Naive thymus-derived CD4-positive, alpha-beta T cell (primary cell): ENCODE measurements at regions of chr1 and their contacts with region 1.

Region 1: GRCh38 chr1:193754732-193755427 is 568.5 kb upstream of the B3GALT2 start:
- DNase-seq: no peak
- ATAC-seq: no peak
- H3K4me3 ChIP-seq: no peak overlapping the region
- H3K4me3 Mint-ChIP-seq: no peak overlapping the region
- H3K27ac ChIP-seq: no peak overlapping the region
- H3K27ac Mint-ChIP-seq: no peak overlapping the region
- H3K4me1 ChIP-seq: no peaks in the 10 kb centered on the region
- H3K4me1 Mint-ChIP-seq: peaks cover 0 to 6% (median 0%) of the 10 kb centered on the region in 7 donors
- H3K27me3 ChIP-seq: no peaks in the 10 kb centered on the region
- H3K27me3 Mint-ChIP-seq: no peaks in the 10 kb centered on the region

Region 2: DNA sequence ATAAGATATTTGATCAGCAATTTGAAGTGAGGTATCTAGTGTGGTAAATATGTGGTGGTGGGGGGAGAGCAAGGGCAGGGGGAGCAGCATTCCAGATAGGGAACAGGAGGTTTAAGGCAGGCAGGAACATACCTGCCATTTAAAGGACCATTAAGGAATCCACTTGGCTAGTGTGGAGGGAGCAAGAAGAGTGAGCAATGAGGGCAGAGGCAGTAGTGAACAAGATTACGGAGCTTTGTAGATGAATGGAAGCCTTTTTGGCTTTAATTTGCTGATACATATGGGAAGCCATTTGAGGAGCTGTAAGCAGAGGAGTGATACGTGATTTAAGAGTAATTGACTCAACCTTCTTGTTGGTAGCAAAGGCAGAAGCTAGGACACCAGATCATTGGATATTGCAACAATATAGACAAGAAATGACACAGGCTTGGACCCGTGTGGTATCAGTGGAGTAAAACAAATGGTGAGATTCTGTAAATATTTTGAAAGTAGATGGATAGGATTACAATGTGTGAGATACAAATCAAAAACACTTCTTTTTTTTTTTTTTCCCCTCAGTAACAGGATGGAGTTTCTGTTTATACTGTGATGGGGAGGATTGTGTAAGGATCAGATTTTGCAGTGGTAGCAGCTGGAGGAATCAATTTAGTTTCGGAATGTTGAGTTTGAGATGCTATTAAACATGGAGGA is 494.7 kb before region 1 on chr1:
- CTCF ChIA-PET with region 1: no interaction called
- POLR2A ChIA-PET with region 1: no interaction called
- intact Hi-C with region 1: loop called in 1 of 2 experiments (anchors 10 kb)
- DNase-seq: no peak
- ATAC-seq: no peak
- H3K4me3 ChIP-seq: no peak overlapping the region
- H3K4me3 Mint-ChIP-seq: no peak overlapping the region
- H3K27ac ChIP-seq: no peak overlapping the region
- H3K27ac Mint-ChIP-seq: no peak overlapping the region
- H3K4me1 ChIP-seq: no peaks in the 10 kb centered on the region
- H3K4me1 Mint-ChIP-seq: peaks cover 0 to 7% (median 0%) of the 10 kb centered on the region in 7 donors
- H3K27me3 ChIP-seq: no peaks in the 10 kb centered on the region
- H3K27me3 Mint-ChIP-seq: no peaks in the 10 kb centered on the region

Region 3: GRCh38 chr1:193456811-193457280 is 298.0 kb before region 1 on chr1:
- CTCF ChIA-PET with region 1: interaction called, 3 read pairs
- POLR2A ChIA-PET with region 1: no interaction called
- intact Hi-C with region 1: loop called in 1 of 2 experiments (anchors 10 kb)
- DNase-seq: no peak
- ATAC-seq: no peak
- H3K4me3 ChIP-seq: no peak overlapping the region
- H3K4me3 Mint-ChIP-seq: no peak overlapping the region
- H3K27ac ChIP-seq: no peak overlapping the region
- H3K27ac Mint-ChIP-seq: no peak overlapping the region
- H3K4me1 ChIP-seq: peaks cover 6 to 15% of the 10 kb centered on the region in 2 donors
- H3K4me1 Mint-ChIP-seq: peaks cover 11 to 23% (median 12%) of the 10 kb centered on the region in 7 donors
- H3K27me3 ChIP-seq: no peaks in the 10 kb centered on the region
- H3K27me3 Mint-ChIP-seq: no peaks in the 10 kb centered on the region

Region 4: DNA sequence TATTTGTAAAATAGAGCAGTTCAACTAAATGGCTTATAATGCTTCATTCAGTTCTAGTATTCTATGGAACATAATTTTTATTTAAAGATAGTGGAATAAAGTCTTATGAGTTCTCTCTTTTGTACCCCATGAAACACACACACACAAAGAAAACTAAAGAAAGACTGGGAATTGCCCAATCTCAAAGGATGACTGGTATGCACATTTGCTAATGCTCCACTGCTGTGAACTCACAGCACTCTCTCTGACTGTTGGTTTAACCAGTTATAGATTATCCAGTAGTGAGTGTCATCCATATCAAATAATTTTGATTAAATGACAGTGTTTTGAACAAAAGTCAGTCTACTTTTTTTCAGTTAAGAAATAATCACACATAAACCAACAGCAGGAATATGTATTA is 514.0 kb after region 1 on chr1:
- CTCF ChIA-PET with region 1: no interaction called
- POLR2A ChIA-PET with region 1: no interaction called
- intact Hi-C with region 1: no loop called
- DNase-seq: no peak
- ATAC-seq: no peak
- H3K4me3 ChIP-seq: no peak overlapping the region
- H3K4me3 Mint-ChIP-seq: no peak overlapping the region
- H3K27ac ChIP-seq: no peak overlapping the region
- H3K27ac Mint-ChIP-seq: no peak overlapping the region
- H3K4me1 ChIP-seq: no peaks in the 10 kb centered on the region
- H3K4me1 Mint-ChIP-seq: peaks cover 0 to 6% (median 0%) of the 10 kb centered on the region in 7 donors
- H3K27me3 ChIP-seq: no peaks in the 10 kb centered on the region
- H3K27me3 Mint-ChIP-seq: no peaks in the 10 kb centered on the region

Region 5: GRCh38 chr1:194640322-194640721 is 885.4 kb after region 1 on chr1:
- CTCF ChIA-PET with region 1: no interaction called
- POLR2A ChIA-PET with region 1: no interaction called
- intact Hi-C with region 1: no loop called
- DNase-seq: no peak
- ATAC-seq: no peak
- H3K4me3 ChIP-seq: no peak overlapping the region
- H3K4me3 Mint-ChIP-seq: no peak overlapping the region
- H3K27ac ChIP-seq: no peak overlapping the region
- H3K27ac Mint-ChIP-seq: no peak overlapping the region
- H3K4me1 ChIP-seq: no peaks in the 10 kb centered on the region
- H3K4me1 Mint-ChIP-seq: no peaks in the 10 kb centered on the region
- H3K27me3 ChIP-seq: no peaks in the 10 kb centered on the region
- H3K27me3 Mint-ChIP-seq: no peaks in the 10 kb centered on the region

Region 6: GRCh38 chr1:195030793-195031192 is 1275.9 kb after region 1 on chr1:
- CTCF ChIA-PET with region 1: no interaction called
- POLR2A ChIA-PET with region 1: no interaction called
- intact Hi-C with region 1: no loop called
- DNase-seq: no peak
- ATAC-seq: peak; percentile 26
- H3K4me3 ChIP-seq: no peak overlapping the region
- H3K4me3 Mint-ChIP-seq: no peak overlapping the region
- H3K27ac ChIP-seq: no peak overlapping the region
- H3K27ac Mint-ChIP-seq: no peak overlapping the region
- H3K4me1 ChIP-seq: no peaks in the 10 kb centered on the region
- H3K4me1 Mint-ChIP-seq: no peaks in the 10 kb centered on the region
- H3K27me3 ChIP-seq: no peaks in the 10 kb centered on the region
- H3K27me3 Mint-ChIP-seq: no peaks in the 10 kb centered on the region